Caco-2 (cell line): ENCODE measurements at regions of chr11 and their contacts with region 1.

Region 1: DNA sequence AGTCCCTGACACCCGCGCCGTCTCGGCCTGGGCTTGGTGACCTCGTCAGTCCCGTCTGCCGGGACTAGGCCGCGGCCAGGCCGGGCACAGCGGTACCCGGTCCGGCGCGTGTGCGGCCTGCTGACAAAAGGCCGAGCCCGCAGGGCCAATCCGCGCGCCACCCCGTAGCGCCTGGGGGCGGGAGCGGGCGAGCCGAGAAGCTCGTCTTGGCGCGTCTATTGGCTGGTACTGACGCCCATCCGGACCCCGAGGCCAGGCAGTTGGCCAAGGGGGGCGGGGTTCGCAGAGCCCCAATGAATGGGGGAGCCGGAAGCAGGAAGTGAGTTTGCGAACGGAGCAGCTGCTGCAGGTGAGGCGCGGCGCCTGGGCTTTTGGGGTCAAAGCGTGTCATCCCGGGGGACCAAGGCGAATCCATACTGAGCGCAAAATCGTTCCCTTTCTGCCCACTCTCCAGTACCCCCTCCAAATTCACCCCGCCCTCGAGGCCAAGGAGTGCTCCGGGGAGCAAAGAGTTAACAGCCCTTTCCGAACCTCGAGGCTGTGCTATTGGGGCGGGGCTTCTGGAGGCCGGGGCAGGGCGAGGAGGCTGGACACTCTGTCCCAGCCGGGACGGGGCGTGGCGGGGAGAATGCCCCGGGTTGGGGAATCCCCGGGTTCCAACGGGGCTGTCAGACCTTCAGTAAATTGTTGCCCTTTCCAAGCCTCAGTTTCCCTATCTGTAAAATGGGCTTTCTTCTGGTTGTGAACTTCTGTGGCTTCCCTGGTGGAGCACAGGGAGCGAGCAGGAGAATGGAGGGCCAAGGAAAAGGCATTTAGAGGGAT is at the start of gene DPP3:
- DNase-seq: peak; percentile 100
- H3K4me3 ChIP-seq: peak within 1 kb of the TSS; percentile 68
- H3K4me3 Mint-ChIP-seq: peak within 1 kb of the TSS; percentile 89
- H3K27ac Mint-ChIP-seq: peak within 1 kb of the TSS; percentile 89
- H3K4me1 ChIP-seq: peaks cover 6% of the 10 kb centered on the region; the same call in 1 of the 2 replicates
- H3K4me1 Mint-ChIP-seq: peaks cover 24% of the 10 kb centered on the region
- H3K27me3 ChIP-seq: no peaks in the 10 kb centered on the region
- H3K27me3 Mint-ChIP-seq: no peaks in the 10 kb centered on the region
- CTCF ChIP-seq: no peak
- total RNA-seq, gene DPP3: 106 TPM in 2 replicates

Region 2: GRCh38 chr11:66408488-66409214 is 71.7 kb before region 1 on chr11:
- CTCF ChIA-PET with region 1: interaction called, 5 read pairs
- POLR2A ChIA-PET with region 1: no interaction called
- intact Hi-C with region 1: loop called (anchors 1 kb)
- DNase-seq: peak; percentile 76 to 93
- H3K4me3 ChIP-seq: peak overlapping the region; percentile 19
- H3K4me3 Mint-ChIP-seq: peak overlapping the region; percentile 73
- H3K27ac Mint-ChIP-seq: no peak overlapping the region
- H3K4me1 ChIP-seq: no peaks in the 10 kb centered on the region
- H3K4me1 Mint-ChIP-seq: no peaks in the 10 kb centered on the region
- H3K27me3 ChIP-seq: no peaks in the 10 kb centered on the region
- H3K27me3 Mint-ChIP-seq: peaks cover 28% of the 10 kb centered on the region
- CTCF ChIP-seq: peak; percentile 99 to 100

Region 3: DNA sequence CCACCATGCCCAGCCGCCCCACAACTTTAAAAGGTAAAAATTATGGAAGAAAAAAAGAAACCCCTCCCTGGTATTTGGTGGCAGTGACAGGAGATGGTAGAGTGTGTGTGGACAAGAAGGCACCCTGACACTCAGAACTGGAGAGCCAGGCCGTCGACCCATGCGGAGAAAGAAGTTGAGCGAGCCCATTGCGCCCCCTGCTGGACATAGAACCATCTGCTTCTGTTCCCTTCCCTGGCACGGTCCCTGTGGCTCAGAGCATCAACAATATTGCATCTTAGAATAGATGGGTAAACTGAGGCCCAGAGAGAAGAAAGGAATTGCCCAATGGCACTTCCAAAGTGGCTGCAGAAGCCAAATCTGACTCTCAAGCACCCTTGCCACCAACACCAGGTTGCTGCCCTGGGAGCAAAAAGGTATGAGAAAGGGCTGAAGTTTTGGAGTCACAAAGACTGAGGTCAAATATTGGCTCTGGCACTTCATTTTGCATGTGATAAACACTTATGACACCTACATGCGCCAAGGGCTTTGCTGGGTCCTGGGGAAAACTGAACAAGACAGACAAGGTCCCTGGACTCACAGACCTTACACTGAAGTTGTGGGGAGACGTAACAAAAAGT is 50.2 kb before region 1 on chr11:
- CTCF ChIA-PET with region 1: interaction called, 5 read pairs
- POLR2A ChIA-PET with region 1: interaction called, 3 read pairs
- intact Hi-C with region 1: loop called (anchors 1 kb)
- DNase-seq: peak; percentile 78 to 85
- H3K4me3 ChIP-seq: no peak overlapping the region
- H3K4me3 Mint-ChIP-seq: no peak overlapping the region
- H3K27ac Mint-ChIP-seq: no peak overlapping the region
- H3K4me1 ChIP-seq: no peaks in the 10 kb centered on the region
- H3K4me1 Mint-ChIP-seq: no peaks in the 10 kb centered on the region
- H3K27me3 ChIP-seq: no peaks in the 10 kb centered on the region
- H3K27me3 Mint-ChIP-seq: no peaks in the 10 kb centered on the region
- CTCF ChIP-seq: peak; percentile 94 to 96

Region 4: GRCh38 chr11:66466225-66467027 is 13.9 kb before region 1 on chr11 and contains the start of gene PELI3:
- CTCF ChIA-PET with region 1: interaction called, 44 read pairs
- POLR2A ChIA-PET with region 1: interaction called, 98 read pairs
- intact Hi-C with region 1: loop called (anchors 1 kb)
- DNase-seq: peak; percentile 97
- H3K4me3 ChIP-seq: peak within 1 kb of the TSS; percentile 66
- H3K4me3 Mint-ChIP-seq: peak within 1 kb of the TSS; percentile 90
- H3K27ac Mint-ChIP-seq: peak within 1 kb of the TSS; percentile 62
- H3K4me1 ChIP-seq: peaks cover 19% of the 10 kb centered on the region
- H3K4me1 Mint-ChIP-seq: peaks cover 17% of the 10 kb centered on the region
- H3K27me3 ChIP-seq: no peaks in the 10 kb centered on the region; the same call in 1 of the 2 replicates
- H3K27me3 Mint-ChIP-seq: no peaks in the 10 kb centered on the region
- CTCF ChIP-seq: no peak
- total RNA-seq, gene PELI3: 21.0 and 21.1 TPM in 2 replicates

Region 5: GRCh38 chr11:66510271-66510989 is 30.1 kb after region 1 on chr11 and contains the start of gene BBS1:
- CTCF ChIA-PET with region 1: no interaction called
- POLR2A ChIA-PET with region 1: interaction called, 5 read pairs
- intact Hi-C with region 1: loop called (anchors 1 kb)
- DNase-seq: peak; percentile 94 to 96
- H3K4me3 ChIP-seq: peak within 1 kb of the TSS; percentile 52
- H3K4me3 Mint-ChIP-seq: peak within 1 kb of the TSS; percentile 97
- H3K27ac Mint-ChIP-seq: peak within 1 kb of the TSS; percentile 93
- H3K4me1 ChIP-seq: peaks cover 5% of the 10 kb centered on the region
- H3K4me1 Mint-ChIP-seq: peaks cover 8% of the 10 kb centered on the region
- H3K27me3 ChIP-seq: no peaks in the 10 kb centered on the region
- H3K27me3 Mint-ChIP-seq: no peaks in the 10 kb centered on the region
- CTCF ChIP-seq: no peak
- total RNA-seq, gene BBS1: 47.1 and 50.0 TPM in 2 replicates

Region 6: DNA sequence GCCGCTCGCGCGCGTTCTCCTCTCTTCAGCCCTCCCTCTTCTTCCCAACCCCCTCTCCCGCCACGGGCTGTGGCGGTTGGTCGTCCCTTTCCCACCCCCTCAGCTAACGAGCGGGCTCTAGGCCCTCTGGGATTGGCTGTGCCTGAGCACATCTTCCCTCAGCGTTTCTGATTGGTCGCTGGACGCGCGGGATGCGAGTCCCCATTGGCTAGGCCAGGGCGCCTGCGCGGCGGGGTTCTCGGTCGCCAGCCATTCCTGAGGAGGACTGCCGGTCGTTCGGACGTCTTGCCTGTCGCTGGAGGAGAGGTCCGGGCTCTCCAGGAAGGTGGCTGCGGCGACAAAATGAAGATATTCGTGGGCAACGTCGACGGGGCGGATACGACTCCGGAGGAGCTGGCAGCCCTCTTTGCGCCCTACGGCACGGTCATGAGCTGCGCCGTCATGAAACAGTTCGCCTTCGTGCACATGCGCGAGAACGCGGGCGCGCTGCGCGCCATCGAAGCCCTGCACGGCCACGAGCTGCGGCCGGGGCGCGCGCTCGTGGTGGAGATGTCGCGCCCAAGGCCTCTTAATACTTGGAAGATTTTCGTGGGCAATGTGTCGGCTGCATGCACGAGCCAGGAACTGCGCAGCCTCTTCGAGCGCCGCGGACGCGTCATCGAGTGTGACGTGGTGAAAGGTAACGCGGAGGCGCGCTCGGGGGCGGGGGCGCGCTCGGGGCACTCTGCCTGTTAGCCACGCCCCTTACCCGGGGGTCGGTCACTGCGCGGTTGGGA is 136.2 kb after region 1 on chr11 and contains the start of gene RBM14:
- CTCF ChIA-PET with region 1: interaction called, 8 read pairs
- POLR2A ChIA-PET with region 1: interaction called, 14 read pairs
- intact Hi-C with region 1: loop called (anchors 1 kb)
- DNase-seq: peak; percentile 100
- H3K4me3 ChIP-seq: peak within 1 kb of the TSS; percentile 57
- H3K4me3 Mint-ChIP-seq: peak within 1 kb of the TSS; percentile 94
- H3K27ac Mint-ChIP-seq: peak within 1 kb of the TSS; percentile 99
- H3K4me1 ChIP-seq: peaks cover 17% of the 10 kb centered on the region
- H3K4me1 Mint-ChIP-seq: peaks cover 25% of the 10 kb centered on the region
- H3K27me3 ChIP-seq: no peaks in the 10 kb centered on the region
- H3K27me3 Mint-ChIP-seq: no peaks in the 10 kb centered on the region
- CTCF ChIP-seq: no peak
- total RNA-seq, gene RBM14: 160 and 173 TPM in 2 replicates

Region 7: DNA sequence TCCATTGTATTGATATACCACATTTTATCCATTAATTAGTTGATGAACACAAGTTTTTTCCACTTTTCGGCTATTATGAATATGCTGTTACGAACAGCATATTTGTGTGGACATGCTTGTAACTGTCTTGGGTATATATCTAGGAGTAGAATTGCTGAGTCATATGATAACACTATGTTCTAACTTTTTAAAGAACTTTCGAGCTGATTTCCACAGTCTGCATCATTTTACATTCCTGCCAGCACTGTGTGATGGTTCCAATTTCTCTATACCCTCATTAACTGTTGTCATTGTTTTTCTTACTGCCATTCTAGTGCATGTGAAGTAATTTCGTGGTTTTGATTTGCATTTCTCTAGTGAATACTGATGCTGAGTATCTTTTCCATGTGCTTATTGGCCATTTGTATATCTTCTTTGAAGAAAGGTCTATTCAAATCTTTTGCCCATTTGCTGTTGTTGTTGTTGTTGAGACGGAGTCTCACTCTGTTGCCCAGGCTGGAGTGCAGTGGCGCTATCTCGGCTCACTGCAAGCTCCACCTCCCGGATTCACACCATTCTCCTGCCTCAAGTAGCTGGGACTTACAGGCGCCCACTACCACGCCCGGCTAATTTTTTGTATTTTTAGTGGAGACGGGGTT is 355.6 kb after region 1 on chr11:
- CTCF ChIA-PET with region 1: interaction called, 7 read pairs
- POLR2A ChIA-PET with region 1: no interaction called
- intact Hi-C with region 1: loop called (anchors 1 kb)
- DNase-seq: no peak
- H3K4me3 ChIP-seq: no peak overlapping the region
- H3K4me3 Mint-ChIP-seq: no peak overlapping the region
- H3K27ac Mint-ChIP-seq: no peak overlapping the region
- H3K4me1 ChIP-seq: no peaks in the 10 kb centered on the region; the same call in 1 of the 2 replicates
- H3K4me1 Mint-ChIP-seq: peaks cover 13% of the 10 kb centered on the region
- H3K27me3 ChIP-seq: no peaks in the 10 kb centered on the region
- H3K27me3 Mint-ChIP-seq: no peaks in the 10 kb centered on the region
- CTCF ChIP-seq: no peak